ENCODE measurements at regions of chr2 and their contacts with region 1.

Region 1: GRCh38 chr2:9984217-9984739 is 32.8 kb downstream of the GRHL1 start:
- DNase-seq: peak; percentile 43
- ATAC-seq: peak; percentile 64
- H3K4me3 Mint-ChIP-seq: no peak overlapping the region
- H3K27ac Mint-ChIP-seq: no peak overlapping the region
- H3K4me1 Mint-ChIP-seq: peaks cover 14% of the 10 kb centered on the region
- H3K27me3 Mint-ChIP-seq: peaks cover 25% of the 10 kb centered on the region

Region 2: GRCh38 chr2:9813312-9814133 is 170.8 kb before region 1 on chr2:
- CTCF ChIA-PET with region 1: interaction called, 36 read pairs
- POLR2A ChIA-PET with region 1: no interaction called
- DNase-seq: peak; percentile 77
- ATAC-seq: peak; percentile 93
- H3K4me3 Mint-ChIP-seq: no peak overlapping the region
- H3K27ac Mint-ChIP-seq: no peak overlapping the region
- H3K4me1 Mint-ChIP-seq: peaks cover 15% of the 10 kb centered on the region
- H3K27me3 Mint-ChIP-seq: peaks cover 19% of the 10 kb centered on the region

Region 3: GRCh38 chr2:9967053-9967775 is 17.1 kb before region 1 on chr2:
- CTCF ChIA-PET with region 1: interaction called, 39 read pairs
- POLR2A ChIA-PET with region 1: interaction called, 3 read pairs
- DNase-seq: no peak
- ATAC-seq: no peak
- H3K4me3 Mint-ChIP-seq: no peak overlapping the region
- H3K27ac Mint-ChIP-seq: no peak overlapping the region
- H3K4me1 Mint-ChIP-seq: peaks cover 16% of the 10 kb centered on the region
- H3K27me3 Mint-ChIP-seq: peaks cover 5% of the 10 kb centered on the region

Region 4: DNA sequence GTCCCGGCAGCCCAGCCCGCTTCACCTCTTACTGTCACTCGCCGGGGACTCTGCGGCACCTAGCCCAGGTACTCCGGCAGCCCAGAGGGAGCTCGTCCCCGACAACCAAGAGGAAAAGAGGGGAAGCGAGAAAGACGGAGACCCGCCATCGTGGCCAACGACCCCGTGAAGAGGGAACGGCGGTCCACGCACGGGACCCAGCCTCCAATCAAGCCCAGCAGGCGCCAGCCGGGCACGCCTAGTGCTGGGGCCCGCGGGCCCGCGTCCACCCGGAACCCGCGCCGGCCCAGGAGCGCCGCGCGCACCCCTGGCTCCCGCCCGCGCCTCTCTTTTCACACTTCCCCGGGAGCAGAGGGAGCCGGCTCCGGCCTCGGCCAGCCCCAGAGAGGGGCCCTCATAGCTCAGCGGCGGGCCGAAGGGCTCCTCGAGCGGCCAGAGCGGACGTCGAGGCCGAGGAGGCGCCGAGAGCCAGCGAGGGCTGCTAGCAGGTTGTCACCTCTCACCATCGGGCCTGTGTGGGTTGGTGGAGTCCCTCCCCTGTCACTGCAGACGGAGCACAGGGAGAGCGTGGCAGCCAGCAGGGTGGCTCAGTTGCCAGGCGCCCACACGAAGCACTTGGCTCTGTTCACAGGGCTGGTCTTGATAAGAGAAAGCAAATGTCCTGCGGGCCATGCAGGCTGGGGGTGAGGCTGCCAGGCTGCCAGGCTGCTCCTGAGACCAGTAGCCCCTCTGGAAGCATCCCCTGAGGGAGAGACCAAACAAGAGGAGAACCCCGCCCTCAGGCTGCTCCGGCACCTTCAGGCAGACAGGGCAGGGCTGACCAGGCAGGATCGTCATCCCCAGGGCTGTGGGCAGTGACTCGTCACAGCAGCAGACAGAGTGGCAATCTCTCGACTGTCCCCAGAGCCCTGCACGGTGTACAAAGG is 22.2 kb after region 1 on chr2:
- CTCF ChIA-PET with region 1: interaction called, 22 read pairs
- POLR2A ChIA-PET with region 1: no interaction called
- DNase-seq: no peak
- ATAC-seq: peak; percentile 30
- H3K4me3 Mint-ChIP-seq: no peak overlapping the region
- H3K27ac Mint-ChIP-seq: no peak overlapping the region
- H3K4me1 Mint-ChIP-seq: no peaks in the 10 kb centered on the region
- H3K27me3 Mint-ChIP-seq: peaks cover 18% of the 10 kb centered on the region

Region 5: GRCh38 chr2:10028988-10029874 is 45.0 kb after region 1 on chr2:
- CTCF ChIA-PET with region 1: interaction called, 16 read pairs
- POLR2A ChIA-PET with region 1: interaction called, 4 read pairs
- DNase-seq: peak; percentile 77
- ATAC-seq: peak; percentile 90
- H3K4me3 Mint-ChIP-seq: peak overlapping the region; percentile 64
- H3K27ac Mint-ChIP-seq: peak overlapping the region; percentile 79
- H3K4me1 Mint-ChIP-seq: peaks cover 28% of the 10 kb centered on the region
- H3K27me3 Mint-ChIP-seq: no peaks in the 10 kb centered on the region

Region 6: DNA sequence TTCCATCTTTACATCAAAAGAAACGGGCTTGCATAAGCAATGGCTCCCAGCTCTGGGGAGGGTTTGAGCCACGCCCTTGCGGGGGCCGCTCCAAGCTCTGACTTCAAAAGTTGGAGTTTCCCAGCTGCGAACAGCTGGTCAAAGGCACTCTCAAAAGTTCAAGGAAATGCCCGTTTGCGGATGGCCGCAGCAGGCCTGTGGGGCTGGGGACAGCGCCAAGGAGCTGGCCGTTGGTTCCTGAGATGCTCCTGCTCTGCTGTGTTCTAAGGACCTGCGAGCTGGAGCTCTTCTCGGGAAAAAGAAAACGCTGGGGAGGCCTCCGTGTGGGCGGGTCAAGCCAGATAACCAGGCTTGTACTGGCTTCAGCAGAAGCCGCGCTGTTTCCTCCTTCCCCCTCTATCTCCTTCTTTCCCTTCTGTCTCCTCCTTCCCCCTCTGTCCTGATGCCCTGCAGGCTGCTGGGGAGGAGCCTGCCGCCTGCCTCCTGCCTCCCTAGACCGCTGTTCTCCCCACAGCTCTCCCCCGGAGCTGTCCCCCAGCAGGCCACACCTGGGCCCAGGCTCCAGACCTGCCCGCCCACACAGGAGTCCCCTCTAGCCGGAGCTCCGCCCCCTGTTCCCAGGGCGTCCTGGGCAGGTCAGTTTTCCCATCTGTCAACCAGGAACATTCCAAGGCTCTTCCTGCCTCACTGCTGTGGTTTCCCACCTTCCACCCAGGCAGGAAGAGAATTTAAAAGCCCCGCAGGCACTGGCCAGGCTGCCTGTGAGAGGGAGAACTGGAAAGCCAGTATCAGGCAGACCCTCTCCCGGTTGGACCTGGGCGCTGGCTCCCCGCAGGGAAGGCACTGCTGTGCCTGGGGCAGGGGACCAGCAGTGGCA is 73.2 kb after region 1 on chr2:
- CTCF ChIA-PET with region 1: interaction called, 205 read pairs
- POLR2A ChIA-PET with region 1: no interaction called
- DNase-seq: no peak
- ATAC-seq: no peak
- H3K4me3 Mint-ChIP-seq: no peak overlapping the region
- H3K27ac Mint-ChIP-seq: no peak overlapping the region
- H3K4me1 Mint-ChIP-seq: peaks cover 4% of the 10 kb centered on the region
- H3K27me3 Mint-ChIP-seq: peaks cover 3% of the 10 kb centered on the region

Region 7: DNA sequence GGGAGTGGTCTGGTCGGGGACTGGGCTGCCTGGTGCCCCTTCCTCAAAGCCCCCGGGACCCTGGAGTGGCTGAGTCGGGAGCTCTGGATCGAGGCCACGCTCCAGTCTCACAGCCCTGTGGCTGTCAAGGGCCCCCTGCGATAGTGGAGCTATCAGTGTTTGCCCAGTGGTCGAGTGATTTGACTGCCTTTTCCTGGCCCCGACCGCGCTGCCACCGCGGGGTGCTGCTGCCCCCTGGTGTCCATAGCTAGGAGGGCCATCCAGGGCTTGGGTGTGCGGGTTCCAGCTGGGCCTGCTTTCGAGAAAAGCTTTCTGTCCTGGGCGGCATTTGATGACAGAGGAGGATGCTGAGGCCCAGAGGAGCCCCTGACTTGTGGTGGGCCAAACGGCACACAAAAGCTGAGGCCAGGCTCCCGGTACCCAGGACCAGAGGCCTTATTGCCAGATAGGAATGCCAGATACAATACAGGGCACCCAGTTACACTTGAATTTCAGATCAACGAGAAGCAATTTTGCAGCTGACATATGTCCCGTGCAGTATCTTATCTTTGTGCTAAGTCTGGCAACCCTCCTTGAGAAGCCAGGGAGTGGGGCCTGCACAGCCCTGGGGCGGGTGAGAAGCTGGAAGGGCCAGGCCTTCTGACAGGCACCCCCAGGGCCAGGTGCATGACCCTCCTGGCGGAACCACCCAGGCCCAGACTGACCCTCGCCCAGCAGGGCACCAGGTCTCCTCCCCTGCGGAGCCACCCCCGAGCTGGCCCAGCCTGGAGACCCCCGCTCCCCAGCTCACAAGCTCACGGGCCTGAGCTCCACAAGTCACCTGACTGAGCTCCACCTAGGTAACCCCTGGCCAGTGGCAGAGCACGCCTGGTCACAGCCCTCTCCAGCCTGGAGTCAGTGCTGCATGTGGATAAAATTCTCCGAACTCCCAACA is 450.9 kb after region 1 on chr2:
- CTCF ChIA-PET with region 1: interaction called, 10 read pairs
- POLR2A ChIA-PET with region 1: no interaction called
- DNase-seq: peak; percentile 83
- ATAC-seq: peak; percentile 66
- H3K4me3 Mint-ChIP-seq: no peak overlapping the region
- H3K27ac Mint-ChIP-seq: peak overlapping the region; percentile 8
- H3K4me1 Mint-ChIP-seq: peaks cover 11% of the 10 kb centered on the region
- H3K27me3 Mint-ChIP-seq: peaks cover 15% of the 10 kb centered on the region

Measured in activated CD8-positive, alpha-beta T cell treated with anti-CD3 and anti-CD28 coated beads, Interleukin-2, amount 10 ng/mL, durations not matched to agents 7 days and 5 days (primary cell).